BJ (cell line): ENCODE measurements at regions of chr7 and their contacts with region 1.

Region 1: DNA sequence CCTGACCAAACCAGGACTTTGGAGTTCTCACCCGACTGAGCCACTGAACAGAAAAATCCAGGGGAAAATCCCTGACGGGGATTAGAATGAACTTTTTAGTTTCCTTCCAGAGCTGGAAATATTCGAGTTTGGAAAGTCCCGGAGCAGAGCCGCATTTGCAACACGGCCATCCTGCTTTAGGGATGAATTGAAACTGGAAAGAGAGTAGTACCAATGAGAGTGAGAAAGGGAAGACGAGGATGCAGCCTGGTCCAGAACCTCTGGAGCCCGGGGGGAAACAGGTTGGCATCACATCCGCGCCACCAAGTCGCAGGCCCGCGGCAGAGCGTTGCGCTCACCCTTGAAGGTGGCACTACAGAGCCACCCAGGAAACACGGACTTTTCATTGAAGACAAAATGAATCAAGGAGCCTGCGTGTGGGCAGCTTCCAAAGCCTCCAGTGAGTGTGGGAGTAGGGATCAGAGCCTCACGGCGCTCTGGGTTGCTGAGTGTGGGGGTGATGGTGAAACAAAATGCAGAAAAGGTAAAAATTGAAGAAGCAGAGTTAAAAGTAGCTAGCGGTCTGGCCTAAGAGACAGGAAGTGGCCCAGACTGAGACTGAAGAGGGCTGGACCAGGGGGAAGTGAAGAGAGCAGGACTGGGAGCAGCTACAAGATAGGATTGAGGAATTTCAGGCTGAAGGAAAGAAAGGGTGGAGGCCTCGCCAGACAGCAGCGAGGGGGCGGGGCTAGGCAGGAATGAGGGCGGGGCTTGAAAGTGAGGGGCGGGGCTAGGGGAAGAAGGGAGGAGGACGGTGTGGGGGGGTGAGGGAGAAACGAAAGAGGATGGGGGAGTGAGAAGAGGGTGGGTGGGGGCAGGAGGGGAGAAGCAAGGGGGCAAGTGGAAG is 1.8 kb downstream of the SMURF1 start:
- DNase-seq: no peak
- H3K4me3 ChIP-seq: peak overlapping the region; percentile 52
- H3K27me3 ChIP-seq: no peaks in the 10 kb centered on the region
- CTCF ChIP-seq: no peak

Region 2: GRCh38 chr7:99072126-99072525 is 70.0 kb before region 1 on chr7:
- CTCF ChIA-PET with region 1: no interaction called
- POLR2A ChIA-PET with region 1: interaction called, 10 read pairs
- DNase-seq: no peak
- H3K4me3 ChIP-seq: no peak overlapping the region
- H3K27me3 ChIP-seq: no peaks in the 10 kb centered on the region
- CTCF ChIP-seq: no peak

Region 3: DNA sequence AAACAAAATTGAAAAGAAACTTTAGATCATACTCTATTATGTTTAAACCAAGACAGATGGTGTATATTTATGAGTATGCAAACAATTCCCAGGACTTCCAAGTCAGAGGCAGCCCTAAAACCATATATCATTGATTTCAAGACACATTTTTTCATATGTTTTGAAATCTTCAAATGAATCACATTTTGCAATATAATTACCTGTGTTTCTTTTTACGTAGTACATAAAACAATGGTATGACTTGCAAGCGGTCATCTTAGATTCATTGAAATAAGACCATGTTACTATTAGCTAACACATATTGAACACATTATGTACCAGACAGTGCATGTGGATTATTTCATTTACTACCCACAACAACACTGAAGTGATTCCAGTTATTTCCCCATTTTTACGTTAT is 13.1 kb before region 1 on chr7:
- CTCF ChIA-PET with region 1: interaction called, 3 read pairs
- POLR2A ChIA-PET with region 1: interaction called, 16 read pairs
- DNase-seq: no peak
- H3K4me3 ChIP-seq: no peak overlapping the region
- H3K27me3 ChIP-seq: no peaks in the 10 kb centered on the region
- CTCF ChIP-seq: no peak

Region 4: GRCh38 chr7:99374103-99375064 is 232.3 kb after region 1 on chr7 and contains the start of gene ARPC1B:
- CTCF ChIA-PET with region 1: no interaction called
- POLR2A ChIA-PET with region 1: no interaction called
- DNase-seq: no peak
- H3K4me3 ChIP-seq: peak within 1 kb of the TSS; percentile 94
- H3K27me3 ChIP-seq: no peaks in the 10 kb centered on the region
- CTCF ChIP-seq: no peak
- polyA plus RNA-seq, gene ARPC1B: 209 and 642 TPM in 2 replicates

Region 5: DNA sequence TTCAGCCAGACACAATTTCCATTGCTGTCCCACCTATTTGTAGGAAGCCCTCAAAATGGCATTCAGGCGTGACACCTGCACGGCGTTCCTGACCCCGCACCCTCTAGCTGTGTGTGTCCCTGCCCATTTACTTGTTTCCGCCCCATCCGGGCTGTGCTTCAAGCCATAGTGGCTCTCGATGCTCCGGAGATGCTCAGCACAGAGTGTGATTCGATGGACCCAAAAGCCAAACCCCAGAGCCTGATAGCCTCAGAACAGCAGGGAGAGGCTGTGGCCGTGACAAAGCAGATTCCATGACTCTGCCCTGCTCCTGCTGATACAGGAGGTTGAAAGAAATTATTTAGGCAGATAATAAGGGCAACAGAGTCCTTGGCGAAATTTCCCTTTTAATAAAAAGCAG is 280.1 kb after region 1 on chr7:
- CTCF ChIA-PET with region 1: no interaction called
- POLR2A ChIA-PET with region 1: no interaction called
- DNase-seq: no peak
- H3K4me3 ChIP-seq: no peak overlapping the region
- H3K27me3 ChIP-seq: no peaks in the 10 kb centered on the region
- CTCF ChIP-seq: no peak